PC-3 (cell line): ENCODE measurements at regions of chr6 and their contacts with region 1.

Region 1: DNA sequence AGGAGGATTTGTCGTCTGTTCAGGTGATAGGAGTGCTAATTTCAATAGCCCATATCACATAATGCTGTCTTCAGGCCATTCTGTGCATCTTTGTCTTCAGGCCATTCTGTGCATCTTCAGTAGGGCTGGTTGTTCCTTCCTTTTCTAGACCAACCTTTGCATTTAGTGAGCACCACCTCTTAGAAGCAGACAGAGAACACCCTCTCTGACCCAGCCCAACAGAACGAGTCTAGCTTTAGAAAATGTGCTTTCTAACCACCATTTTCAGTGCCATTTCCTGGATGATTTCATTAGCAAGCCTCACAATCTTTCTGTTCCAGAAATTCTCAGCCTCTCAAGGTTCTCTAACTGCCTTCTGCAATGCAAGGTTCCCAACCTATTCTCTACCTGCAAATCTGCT is 215.3 kb upstream of the KCNQ5 start:
- DNase-seq: no peak
- ATAC-seq: no peak
- H3K4me3 ChIP-seq: no peak overlapping the region
- H3K27ac ChIP-seq: no peak overlapping the region
- H3K4me1 ChIP-seq: 0 out of 2 replicates have a peak, but pooled peaks cover 5% of the 10 kb centered on the region
- H3K27me3 ChIP-seq: no peaks in the 10 kb centered on the region
- CTCF ChIP-seq: no peak

Region 2: GRCh38 chr6:72140795-72141194 is 265.7 kb before region 1 on chr6:
- CTCF ChIA-PET with region 1: no interaction called
- POLR2A ChIA-PET with region 1: no interaction called
- intact Hi-C with region 1: loop called (anchors 5 kb)
- DNase-seq: peak; percentile 33
- ATAC-seq: no peak
- H3K4me3 ChIP-seq: no peak overlapping the region
- H3K27ac ChIP-seq: no peak overlapping the region
- H3K4me1 ChIP-seq: no peaks in the 10 kb centered on the region
- H3K27me3 ChIP-seq: no peaks in the 10 kb centered on the region
- CTCF ChIP-seq: peak; percentile 44; the same call in 1 of the 2 replicates

Region 3: GRCh38 chr6:72260489-72260888 is 146.0 kb before region 1 on chr6:
- CTCF ChIA-PET with region 1: interaction called, 4 read pairs
- POLR2A ChIA-PET with region 1: no interaction called
- intact Hi-C with region 1: loop called (anchors 5 kb)
- DNase-seq: peak; percentile 48
- ATAC-seq: peak; percentile 89
- H3K4me3 ChIP-seq: no peak overlapping the region
- H3K27ac ChIP-seq: peak overlapping the region; percentile 9; the same call in 1 of the 2 replicates
- H3K4me1 ChIP-seq: peaks cover 16% of the 10 kb centered on the region; the same call in 1 of the 2 replicates
- H3K27me3 ChIP-seq: no peaks in the 10 kb centered on the region
- CTCF ChIP-seq: no peak

Region 4: DNA sequence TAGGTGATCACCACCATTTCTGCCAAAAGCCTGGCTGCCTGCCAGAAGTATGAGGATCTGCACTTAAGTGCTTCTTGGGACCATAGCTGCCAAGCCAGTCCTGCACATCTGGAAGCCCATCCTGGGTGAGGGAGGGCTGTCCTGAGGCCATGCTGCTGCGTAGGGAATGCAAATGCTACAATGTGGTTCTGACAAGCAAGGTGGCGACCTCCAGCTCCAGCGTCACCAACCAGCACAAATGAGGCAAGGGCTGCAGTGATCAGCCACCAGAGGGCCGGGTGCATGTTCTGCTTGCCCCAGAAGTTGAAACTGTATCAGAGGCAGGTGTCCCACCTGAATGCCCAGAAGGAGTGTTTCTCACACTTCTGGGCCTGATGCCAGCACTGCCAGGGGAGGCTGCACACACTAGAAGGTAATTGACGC is 116.2 kb after region 1 on chr6:
- CTCF ChIA-PET with region 1: no interaction called
- POLR2A ChIA-PET with region 1: no interaction called
- intact Hi-C with region 1: no loop called
- DNase-seq: peak; percentile 10
- ATAC-seq: no peak
- H3K4me3 ChIP-seq: no peak overlapping the region
- H3K27ac ChIP-seq: no peak overlapping the region
- H3K4me1 ChIP-seq: no peaks in the 10 kb centered on the region
- H3K27me3 ChIP-seq: no peaks in the 10 kb centered on the region
- CTCF ChIP-seq: peak; percentile 37